Activated B cell treated with CpG ODN at 0.5 μM for 24 hours (primary cell): ENCODE measurements at regions of chr19 and their contacts with region 1.

Region 1: GRCh38 chr19:10653715-10654492 is at the start of gene ILF3:
- DNase-seq: peak; percentile 98
- ATAC-seq: peak; percentile 78
- H3K4me3 Mint-ChIP-seq: peak within 1 kb of the TSS; percentile 95
- H3K27ac Mint-ChIP-seq: peak within 1 kb of the TSS; percentile 99
- H3K4me1 Mint-ChIP-seq: peaks cover 48% of the 10 kb centered on the region
- H3K27me3 Mint-ChIP-seq: peaks cover 1% of the 10 kb centered on the region
- CTCF ChIP-seq: no peak
- total RNA-seq, gene ILF3: 373 and 399 TPM in 2 replicates

Region 2: GRCh38 chr19:10424011-10424637 is 229.8 kb before region 1 on chr19:
- CTCF ChIA-PET with region 1: no interaction called
- POLR2A ChIA-PET with region 1: interaction called, 3 read pairs
- intact Hi-C with region 1: loop called (anchors 2 kb)
- DNase-seq: no peak
- ATAC-seq: peak; percentile 9
- H3K4me3 Mint-ChIP-seq: peak overlapping the region; percentile 85
- H3K27ac Mint-ChIP-seq: peak overlapping the region; percentile 72
- H3K4me1 Mint-ChIP-seq: peaks cover 87% of the 10 kb centered on the region
- H3K27me3 Mint-ChIP-seq: peaks cover 31% of the 10 kb centered on the region
- CTCF ChIP-seq: peak; percentile 42

Region 3: DNA sequence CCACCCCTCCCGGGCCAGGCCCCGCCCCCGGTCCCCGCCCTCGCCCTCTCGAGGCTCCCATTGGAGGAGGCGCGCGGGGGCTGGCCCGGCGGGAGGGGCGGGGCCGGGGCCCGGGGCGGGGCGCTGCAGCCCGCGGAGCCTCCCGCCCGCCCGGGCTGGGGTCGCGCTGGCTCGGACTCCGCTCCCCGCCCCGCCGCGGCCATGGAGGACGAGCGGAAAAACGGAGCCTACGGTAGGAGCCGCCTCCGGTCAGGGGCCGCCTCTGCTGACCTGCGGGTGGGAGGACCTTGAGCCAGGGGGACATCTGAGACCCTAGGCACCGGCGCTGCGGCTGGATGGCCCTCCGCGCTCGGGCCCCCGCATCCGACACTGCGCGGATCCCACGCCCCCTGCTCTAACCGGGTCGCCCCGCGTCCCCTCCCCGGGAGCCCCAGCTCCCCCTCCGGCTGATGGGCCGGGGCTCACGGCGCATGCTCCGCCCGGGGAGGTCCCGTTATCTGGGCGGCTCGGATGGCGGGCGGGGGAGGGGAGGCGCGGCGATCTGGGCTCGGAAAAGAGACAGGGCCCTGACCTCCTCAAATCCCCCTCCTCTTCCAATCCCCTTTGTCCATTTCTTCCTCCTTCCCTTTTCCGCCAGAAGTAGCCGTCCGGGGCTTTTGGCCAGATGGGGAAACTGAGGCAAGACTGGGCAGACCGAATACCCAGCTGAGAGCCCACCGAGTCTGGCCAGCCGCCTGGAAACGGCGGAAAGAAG is 51.4 kb before region 1 on chr19:
- CTCF ChIA-PET with region 1: no interaction called
- POLR2A ChIA-PET with region 1: interaction called, 32 read pairs
- intact Hi-C with region 1: loop called (anchors 1 kb)
- DNase-seq: peak; percentile 86
- ATAC-seq: peak; percentile 73
- H3K4me3 Mint-ChIP-seq: peak overlapping the region; percentile 97
- H3K27ac Mint-ChIP-seq: peak overlapping the region; percentile 98
- H3K4me1 Mint-ChIP-seq: peaks cover 39% of the 10 kb centered on the region
- H3K27me3 Mint-ChIP-seq: no peaks in the 10 kb centered on the region
- CTCF ChIP-seq: no peak

Region 4: DNA sequence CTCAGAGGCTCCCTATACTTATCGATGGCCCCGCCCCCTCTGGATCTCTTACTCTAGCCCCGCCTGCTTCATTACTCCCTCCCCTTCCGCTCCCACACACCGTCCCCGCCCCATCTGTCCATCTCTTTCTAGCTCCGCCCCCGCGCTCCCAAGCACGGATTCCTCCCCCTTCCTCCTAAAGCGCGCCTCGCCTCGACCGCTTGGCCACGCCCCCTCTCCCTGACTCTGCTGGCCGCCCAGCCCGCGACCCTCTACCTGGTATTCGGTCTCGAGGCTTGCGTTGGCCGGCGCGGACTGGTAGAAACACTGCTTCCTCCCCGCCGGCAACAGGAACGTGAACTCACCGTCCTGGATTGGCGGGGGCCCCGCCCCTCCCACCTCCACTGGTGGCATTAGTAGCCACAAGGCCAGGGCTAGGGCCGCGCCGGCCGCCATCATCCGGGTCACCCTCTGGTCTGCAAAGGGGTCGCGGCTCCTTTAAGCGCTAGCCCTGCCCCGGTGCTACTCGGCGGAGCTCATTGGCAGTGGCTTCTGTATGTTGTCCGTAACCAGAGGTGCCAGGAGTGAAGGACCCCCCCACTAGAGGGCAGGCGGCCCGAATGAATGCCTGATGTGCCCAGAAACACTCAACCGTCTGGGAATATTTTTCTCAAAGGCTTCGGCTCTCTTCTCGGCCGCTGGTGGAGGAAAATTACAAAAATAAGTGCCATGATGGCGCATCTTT is 182.0 kb after region 1 on chr19 and contains the start of gene TMED1:
- CTCF ChIA-PET with region 1: no interaction called
- POLR2A ChIA-PET with region 1: no interaction called
- intact Hi-C with region 1: loop called (anchors 2 kb)
- DNase-seq: peak; percentile 86
- ATAC-seq: peak; percentile 87
- H3K4me3 Mint-ChIP-seq: peak within 1 kb of the TSS; percentile 97
- H3K27ac Mint-ChIP-seq: peak within 1 kb of the TSS; percentile 99
- H3K4me1 Mint-ChIP-seq: peaks cover 18% of the 10 kb centered on the region
- H3K27me3 Mint-ChIP-seq: no peaks in the 10 kb centered on the region
- CTCF ChIP-seq: no peak
- total RNA-seq, gene TMED1: 11.9 and 15.7 TPM in 2 replicates

Region 5: GRCh38 chr19:11843722-11844121 is 1189.8 kb after region 1 on chr19:
- CTCF ChIA-PET with region 1: no interaction called
- POLR2A ChIA-PET with region 1: interaction called, 10 read pairs
- intact Hi-C with region 1: no loop called
- DNase-seq: no peak
- ATAC-seq: no peak
- H3K4me3 Mint-ChIP-seq: no peak overlapping the region
- H3K27ac Mint-ChIP-seq: no peak overlapping the region
- H3K4me1 Mint-ChIP-seq: peaks cover 10% of the 10 kb centered on the region
- H3K27me3 Mint-ChIP-seq: no peaks in the 10 kb centered on the region
- CTCF ChIP-seq: no peak